Caco-2 (cell line): ENCODE measurements at regions of chr21 and their contacts with region 1.

Region 1: DNA sequence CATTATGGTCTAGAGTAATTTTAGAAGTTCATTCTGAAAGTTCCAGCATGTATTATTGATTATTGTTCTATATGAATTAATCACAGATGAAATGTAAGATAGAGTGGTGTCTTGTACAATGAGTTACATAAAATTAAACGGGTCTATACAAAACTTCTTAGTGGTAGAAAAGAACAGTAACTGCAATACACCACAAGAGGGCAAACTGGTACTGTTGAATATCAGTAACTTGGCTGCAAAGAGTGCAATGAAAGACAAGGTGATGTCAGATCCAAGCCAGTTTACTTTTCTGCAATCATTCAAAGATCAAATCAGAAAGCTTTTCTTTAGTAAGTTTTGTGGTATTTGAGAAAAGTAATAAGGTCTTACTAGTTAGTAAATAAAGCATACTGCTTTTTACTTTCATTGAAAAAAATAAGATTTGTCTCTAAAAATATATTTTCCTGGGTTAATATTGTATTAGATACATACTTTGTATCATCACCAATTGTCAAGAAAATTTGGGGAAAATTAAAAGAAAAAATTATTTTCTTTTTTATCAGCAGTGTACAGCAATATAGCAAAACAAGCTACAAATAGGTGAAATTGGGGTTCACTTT is 66.4 kb upstream of the BTG3 start:
- DNase-seq: peak in 1 of 2 experiments; percentile 57
- H3K4me3 ChIP-seq: no peak overlapping the region
- H3K4me3 Mint-ChIP-seq: no peak overlapping the region
- H3K27ac Mint-ChIP-seq: no peak overlapping the region
- H3K4me1 ChIP-seq: no peaks in the 10 kb centered on the region
- H3K4me1 Mint-ChIP-seq: no peaks in the 10 kb centered on the region
- H3K27me3 ChIP-seq: no peaks in the 10 kb centered on the region
- H3K27me3 Mint-ChIP-seq: no peaks in the 10 kb centered on the region
- CTCF ChIP-seq: peak; percentile 66 to 85

Region 2: DNA sequence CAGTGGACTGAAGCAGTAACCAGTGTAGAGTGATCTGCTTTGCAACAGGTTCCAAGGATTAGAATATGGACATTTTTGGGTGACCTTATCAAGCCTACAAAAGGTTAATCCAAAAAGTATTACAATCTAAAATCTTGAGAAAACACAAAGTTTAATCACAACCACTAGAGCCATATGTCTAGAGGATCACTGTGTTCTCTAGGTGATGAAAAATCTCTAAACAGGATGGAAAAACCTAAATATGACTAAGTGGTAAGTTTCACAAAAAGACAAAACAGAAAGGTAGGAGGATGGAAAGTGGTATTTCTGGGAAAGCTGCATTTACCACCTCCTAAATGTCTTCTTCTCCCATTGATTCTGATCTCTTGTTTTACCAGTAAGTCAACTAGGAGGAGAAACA is 577.4 kb before region 1 on chr21:
- CTCF ChIA-PET with region 1: no interaction called
- POLR2A ChIA-PET with region 1: no interaction called
- intact Hi-C with region 1: no loop called
- DNase-seq: no peak
- H3K4me3 ChIP-seq: no peak overlapping the region
- H3K4me3 Mint-ChIP-seq: no peak overlapping the region
- H3K27ac Mint-ChIP-seq: no peak overlapping the region
- H3K4me1 ChIP-seq: no peaks in the 10 kb centered on the region
- H3K4me1 Mint-ChIP-seq: no peaks in the 10 kb centered on the region
- H3K27me3 ChIP-seq: no peaks in the 10 kb centered on the region
- H3K27me3 Mint-ChIP-seq: no peaks in the 10 kb centered on the region
- CTCF ChIP-seq: no peak

Region 3: DNA sequence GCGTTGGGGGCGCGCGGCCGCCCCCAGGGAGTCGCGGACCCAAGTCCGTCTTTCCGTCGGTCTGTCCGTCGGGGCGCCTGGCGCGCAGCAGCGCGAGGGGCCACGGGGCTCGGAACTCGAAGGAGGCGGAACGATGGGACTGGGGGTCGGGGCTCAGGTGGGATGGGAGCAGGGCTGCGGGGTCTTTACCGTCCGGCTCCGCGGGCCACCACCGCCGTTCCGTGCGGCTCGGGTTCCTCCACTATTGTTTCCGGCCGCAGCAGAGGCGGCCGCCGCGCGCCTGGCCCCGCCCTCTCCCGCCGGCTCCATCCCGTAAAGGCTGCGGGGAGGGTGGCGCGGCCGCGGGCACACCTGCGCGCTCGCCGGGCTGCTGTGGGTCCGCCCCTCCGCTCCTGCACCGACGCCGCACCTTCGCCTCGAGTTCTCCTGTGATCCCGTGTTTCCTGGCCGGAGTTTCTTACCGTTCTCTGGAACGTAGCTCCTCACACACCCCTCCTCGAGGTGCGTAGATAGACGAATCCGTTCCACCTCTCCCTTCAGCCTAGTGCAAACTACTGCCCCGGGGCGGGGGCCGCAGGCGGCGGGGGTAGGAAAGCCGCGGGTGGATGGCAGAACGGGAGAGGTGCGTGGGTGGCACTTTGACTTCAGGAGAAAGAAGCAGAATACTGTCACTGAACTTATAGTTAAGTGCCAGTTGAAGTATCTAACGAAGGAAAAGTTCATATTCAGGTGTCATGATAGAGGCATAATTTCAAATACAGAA is 140.2 kb after region 1 on chr21 and contains the start of gene C21orf91:
- CTCF ChIA-PET with region 1: no interaction called
- POLR2A ChIA-PET with region 1: no interaction called
- intact Hi-C with region 1: loop called (anchors 1 kb)
- DNase-seq: peak; percentile 89 to 92
- H3K4me3 ChIP-seq: peak within 1 kb of the TSS; percentile 93
- H3K4me3 Mint-ChIP-seq: peak within 1 kb of the TSS; percentile 91
- H3K27ac Mint-ChIP-seq: peak within 1 kb of the TSS; percentile 100
- H3K4me1 ChIP-seq: no peaks in the 10 kb centered on the region; the same call in 1 of the 2 replicates
- H3K4me1 Mint-ChIP-seq: no peaks in the 10 kb centered on the region
- H3K27me3 ChIP-seq: no peaks in the 10 kb centered on the region
- H3K27me3 Mint-ChIP-seq: no peaks in the 10 kb centered on the region
- CTCF ChIP-seq: no peak
- total RNA-seq, gene C21orf91: 16.2 and 16.9 TPM in 2 replicates

Region 4: GRCh38 chr21:17903029-17903806 is 224.1 kb after region 1 on chr21:
- CTCF ChIA-PET with region 1: no interaction called
- POLR2A ChIA-PET with region 1: no interaction called
- intact Hi-C with region 1: loop called (anchors 1 kb)
- DNase-seq: no peak
- H3K4me3 ChIP-seq: no peak overlapping the region
- H3K4me3 Mint-ChIP-seq: no peak overlapping the region
- H3K27ac Mint-ChIP-seq: no peak overlapping the region
- H3K4me1 ChIP-seq: no peaks in the 10 kb centered on the region
- H3K4me1 Mint-ChIP-seq: no peaks in the 10 kb centered on the region
- H3K27me3 ChIP-seq: no peaks in the 10 kb centered on the region
- H3K27me3 Mint-ChIP-seq: peaks cover 5% of the 10 kb centered on the region
- CTCF ChIP-seq: no peak

Region 5: DNA sequence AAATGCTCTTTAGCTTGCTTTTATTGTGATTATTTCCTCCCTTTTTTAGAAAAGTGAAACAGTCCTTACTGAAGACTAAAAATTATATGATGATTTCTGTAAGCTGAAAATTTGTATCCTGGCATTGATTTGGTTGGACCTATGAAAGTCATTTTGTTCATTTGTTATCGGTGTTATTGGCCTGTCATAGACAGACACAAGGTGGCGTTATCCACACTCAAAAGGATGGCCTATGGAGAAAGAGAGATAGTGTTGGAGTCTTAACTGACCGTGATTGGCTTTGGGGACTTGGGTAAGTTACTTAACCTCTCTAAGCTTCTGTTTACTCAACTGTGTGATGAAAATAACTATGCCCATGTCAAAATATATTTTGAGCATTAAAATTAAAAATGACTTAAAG is 361.9 kb after region 1 on chr21:
- CTCF ChIA-PET with region 1: no interaction called
- POLR2A ChIA-PET with region 1: no interaction called
- intact Hi-C with region 1: loop called (anchors 5 kb)
- DNase-seq: peak; percentile 31 to 37
- H3K4me3 ChIP-seq: no peak overlapping the region
- H3K4me3 Mint-ChIP-seq: no peak overlapping the region
- H3K27ac Mint-ChIP-seq: no peak overlapping the region
- H3K4me1 ChIP-seq: no peaks in the 10 kb centered on the region
- H3K4me1 Mint-ChIP-seq: no peaks in the 10 kb centered on the region
- H3K27me3 ChIP-seq: no peaks in the 10 kb centered on the region
- H3K27me3 Mint-ChIP-seq: no peaks in the 10 kb centered on the region
- CTCF ChIP-seq: peak; percentile 37 to 70